Transverse colon (tissue), 4 donors: ENCODE measurements at regions of chr16 and their contacts with region 1.

Region 1: GRCh38 chr16:47523342-47524006 is 62.3 kb downstream of the PHKB start:
- DNase-seq: no peak
- H3K4me3 ChIP-seq: no peak overlapping the region
- H3K27ac ChIP-seq: no peak overlapping the region
- H3K4me1 ChIP-seq: peaks cover 0 to 5% (median 0%) of the 10 kb centered on the region in 4 donors
- H3K27me3 ChIP-seq: no peaks in the 10 kb centered on the region
- CTCF ChIP-seq: no peak
- EP300 ChIP-seq: no peak
- POLR2A ChIP-seq: no peak

Region 2: DNA sequence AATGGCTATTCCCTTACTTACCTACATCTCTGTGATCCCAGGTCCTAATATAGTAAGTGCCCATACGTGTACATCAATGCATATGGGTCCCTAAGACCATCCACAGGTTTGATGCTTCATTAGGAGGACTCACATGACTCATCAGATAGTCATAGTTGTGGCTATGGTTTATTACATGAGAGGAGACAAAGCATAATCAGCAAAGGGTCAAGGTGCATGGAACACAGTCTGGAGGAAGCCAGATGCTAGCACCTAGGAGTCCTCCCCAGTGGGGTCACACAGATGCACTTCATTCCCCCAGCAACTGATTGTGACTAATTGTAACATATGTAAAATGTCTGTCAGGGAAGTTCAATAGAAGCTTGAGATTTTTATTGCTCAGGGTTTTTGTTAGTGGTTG is 19.5 kb before region 1 on chr16:
- in situ Hi-C with region 1: no loop called
- intact Hi-C with region 1: loop called (anchors 1 kb)
- DNase-seq: no peak
- H3K4me3 ChIP-seq: no peak overlapping the region
- H3K27ac ChIP-seq: no peak overlapping the region
- H3K4me1 ChIP-seq: no peaks in the 10 kb centered on the region
- H3K27me3 ChIP-seq: no peaks in the 10 kb centered on the region
- CTCF ChIP-seq: no peak
- EP300 ChIP-seq: no peak
- POLR2A ChIP-seq: no peak

Region 3: GRCh38 chr16:47617732-47618131 is 94.3 kb after region 1 on chr16:
- in situ Hi-C with region 1: no loop called
- intact Hi-C with region 1: no loop called
- DNase-seq: no peak
- H3K4me3 ChIP-seq: no peak overlapping the region
- H3K27ac ChIP-seq: no peak overlapping the region
- H3K4me1 ChIP-seq: no peaks in the 10 kb centered on the region
- H3K27me3 ChIP-seq: no peaks in the 10 kb centered on the region
- CTCF ChIP-seq: no peak
- EP300 ChIP-seq: no peak
- POLR2A ChIP-seq: no peak